CD4-positive, alpha-beta T cell (primary cell): ENCODE measurements at regions of chr11 and their contacts with region 1.

Region 1: DNA sequence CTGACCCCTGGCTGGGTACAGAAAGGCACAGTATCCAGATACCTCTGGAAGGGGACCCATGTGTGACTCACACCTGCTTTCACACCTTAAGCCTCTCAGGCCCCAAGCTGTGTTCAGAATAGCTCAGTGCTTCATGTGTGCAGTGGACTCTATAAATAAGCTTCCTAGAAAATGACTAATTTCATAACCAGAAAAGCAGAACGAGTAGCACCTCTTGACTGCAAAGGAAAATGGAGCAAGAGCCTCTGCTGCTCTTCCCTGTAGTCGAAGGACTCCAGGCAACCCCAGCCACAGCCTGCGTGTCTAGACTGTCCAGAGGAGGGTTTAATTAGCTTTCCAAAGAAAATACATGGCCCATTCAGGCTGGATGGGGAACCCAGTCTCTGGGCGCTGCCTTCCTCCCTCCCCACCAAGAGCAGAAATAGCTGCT is 23.1 kb downstream of the PTPN5 start:
- DNase-seq: no peak
- ATAC-seq: no peak
- H3K4me3 ChIP-seq: no peak overlapping the region
- H3K4me3 Mint-ChIP-seq: no peak overlapping the region
- H3K27ac ChIP-seq: no peak overlapping the region
- H3K27ac Mint-ChIP-seq: no peak overlapping the region
- H3K4me1 ChIP-seq: no peaks in the 10 kb centered on the region
- H3K4me1 Mint-ChIP-seq: no peaks in the 10 kb centered on the region
- H3K27me3 ChIP-seq: peaks cover 0 to 3% of the 10 kb centered on the region in 2 experiments
- H3K27me3 Mint-ChIP-seq: peaks cover 18% of the 10 kb centered on the region
- CTCF ChIP-seq: no peak

Region 2: DNA sequence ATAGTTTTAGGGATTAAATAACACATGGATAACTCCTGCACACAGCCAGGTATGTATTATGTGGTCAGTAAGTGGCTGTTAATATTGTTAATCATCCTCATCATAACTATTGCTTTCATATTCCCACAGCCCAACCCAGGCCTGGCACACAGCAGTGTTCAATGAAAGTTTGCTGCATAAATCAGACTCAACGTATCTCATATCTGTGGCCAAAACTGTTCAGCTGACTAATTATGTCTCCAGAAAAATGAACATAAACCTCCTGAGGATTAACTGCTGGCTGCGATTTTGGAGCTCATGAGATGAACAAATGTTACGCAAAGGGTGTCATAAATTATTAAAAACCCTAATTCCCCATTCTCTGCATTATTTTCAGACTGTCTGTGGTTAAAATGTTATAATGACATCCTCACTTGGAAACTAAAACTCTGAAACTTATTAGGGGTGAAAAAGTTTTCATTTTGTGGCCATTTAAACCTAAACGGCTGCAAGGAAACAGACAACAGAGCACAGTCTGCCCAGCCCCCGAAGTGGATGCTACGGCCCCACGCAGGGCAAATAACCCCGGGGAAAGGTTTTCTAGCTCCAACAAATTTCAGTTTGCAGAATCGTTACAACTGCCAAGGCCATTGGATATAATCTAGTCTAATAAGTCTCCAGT is 1309.1 kb before region 1 on chr11:
- CTCF ChIA-PET with region 1: no interaction called
- POLR2A ChIA-PET with region 1: no interaction called
- intact Hi-C with region 1: no loop called
- DNase-seq: no peak
- ATAC-seq: no peak
- H3K4me3 ChIP-seq: no peak overlapping the region
- H3K4me3 Mint-ChIP-seq: no peak overlapping the region
- H3K27ac ChIP-seq: no peak overlapping the region
- H3K27ac Mint-ChIP-seq: no peak overlapping the region
- H3K4me1 ChIP-seq: no peaks in the 10 kb centered on the region
- H3K4me1 Mint-ChIP-seq: no peaks in the 10 kb centered on the region
- H3K27me3 ChIP-seq: no peaks in the 10 kb centered on the region
- H3K27me3 Mint-ChIP-seq: no peaks in the 10 kb centered on the region
- CTCF ChIP-seq: no peak

Region 3: GRCh38 chr11:17991783-17992433 is 776.6 kb before region 1 on chr11:
- CTCF ChIA-PET with region 1: no interaction called
- POLR2A ChIA-PET with region 1: no interaction called
- intact Hi-C with region 1: loop called in 1 of 2 experiments (anchors 1 kb)
- DNase-seq: peak in 13 of 14 experiments; percentile 15 to 71 (median 35)
- ATAC-seq: peak; percentile 88
- H3K4me3 ChIP-seq: no peak overlapping the region
- H3K4me3 Mint-ChIP-seq: no peak overlapping the region
- H3K27ac ChIP-seq: no peak overlapping the region
- H3K27ac Mint-ChIP-seq: no peak overlapping the region
- H3K4me1 ChIP-seq: no peaks in the 10 kb centered on the region
- H3K4me1 Mint-ChIP-seq: no peaks in the 10 kb centered on the region
- H3K27me3 ChIP-seq: no peaks in the 10 kb centered on the region
- H3K27me3 Mint-ChIP-seq: no peaks in the 10 kb centered on the region
- CTCF ChIP-seq: peak; percentile 88

Region 4: GRCh38 chr11:18171377-18172000 is 597.0 kb before region 1 on chr11:
- CTCF ChIA-PET with region 1: no interaction called
- POLR2A ChIA-PET with region 1: no interaction called
- intact Hi-C with region 1: loop called in 1 of 2 experiments (anchors 2 kb)
- DNase-seq: peak in 1 of 14 experiments; percentile 17
- ATAC-seq: no peak
- H3K4me3 ChIP-seq: no peak overlapping the region
- H3K4me3 Mint-ChIP-seq: no peak overlapping the region
- H3K27ac ChIP-seq: no peak overlapping the region
- H3K27ac Mint-ChIP-seq: no peak overlapping the region
- H3K4me1 ChIP-seq: no peaks in the 10 kb centered on the region
- H3K4me1 Mint-ChIP-seq: no peaks in the 10 kb centered on the region
- H3K27me3 ChIP-seq: peaks cover 2 to 9% of the 10 kb centered on the region in 2 experiments
- H3K27me3 Mint-ChIP-seq: peaks cover 39% of the 10 kb centered on the region
- CTCF ChIP-seq: no peak

Region 5: GRCh38 chr11:18235394-18236334 is 532.8 kb before region 1 on chr11:
- CTCF ChIA-PET with region 1: no interaction called
- POLR2A ChIA-PET with region 1: no interaction called
- intact Hi-C with region 1: loop called in 1 of 2 experiments (anchors 10 kb)
- DNase-seq: no peak
- ATAC-seq: no peak
- H3K4me3 ChIP-seq: no peak overlapping the region
- H3K4me3 Mint-ChIP-seq: no peak overlapping the region
- H3K27ac ChIP-seq: no peak overlapping the region
- H3K27ac Mint-ChIP-seq: no peak overlapping the region
- H3K4me1 ChIP-seq: no peaks in the 10 kb centered on the region
- H3K4me1 Mint-ChIP-seq: no peaks in the 10 kb centered on the region
- H3K27me3 ChIP-seq: peaks cover 4 to 10% of the 10 kb centered on the region in 2 experiments
- H3K27me3 Mint-ChIP-seq: peaks cover 31% of the 10 kb centered on the region
- CTCF ChIP-seq: no peak

Region 6: GRCh38 chr11:19218786-19219460 is 450.4 kb after region 1 on chr11:
- CTCF ChIA-PET with region 1: no interaction called
- POLR2A ChIA-PET with region 1: no interaction called
- intact Hi-C with region 1: no loop called
- DNase-seq: no peak
- ATAC-seq: no peak
- H3K4me3 ChIP-seq: no peak overlapping the region
- H3K4me3 Mint-ChIP-seq: no peak overlapping the region
- H3K27ac ChIP-seq: no peak overlapping the region
- H3K27ac Mint-ChIP-seq: no peak overlapping the region
- H3K4me1 ChIP-seq: no peaks in the 10 kb centered on the region
- H3K4me1 Mint-ChIP-seq: no peaks in the 10 kb centered on the region
- H3K27me3 ChIP-seq: no peaks in the 10 kb centered on the region
- H3K27me3 Mint-ChIP-seq: peaks cover 15% of the 10 kb centered on the region
- CTCF ChIP-seq: no peak